ENCODE measurements at regions of chr3 and their contacts with region 1.

Region 1: GRCh38 chr3:4512895-4513616 is 19.9 kb downstream of the ITPR1 start:
- DNase-seq: no peak
- H3K4me3 ChIP-seq: no peak overlapping the region
- H3K4me3 Mint-ChIP-seq: no peak overlapping the region
- H3K27ac ChIP-seq: no peak overlapping the region
- H3K27ac Mint-ChIP-seq: peak overlapping the region in 2 of 7 donors; percentile 39
- H3K4me1 ChIP-seq: peaks cover 12% of the 10 kb centered on the region
- H3K4me1 Mint-ChIP-seq: peaks cover 17 to 20% (median 19%) of the 10 kb centered on the region in 4 donors
- H3K27me3 ChIP-seq: no peaks in the 10 kb centered on the region
- H3K27me3 Mint-ChIP-seq: no peaks in the 10 kb centered on the region

Region 2: GRCh38 chr3:4466741-4467521 is 46.1 kb before region 1 on chr3 and contains the start of gene SUMF1:
- CTCF ChIA-PET with region 1: interaction called, 4 read pairs
- POLR2A ChIA-PET with region 1: no interaction called
- intact Hi-C with region 1: loop called (anchors 2 kb)
- DNase-seq: peak; percentile 67 to 81 (median 74)
- H3K4me3 ChIP-seq: peak within 1 kb of the TSS; percentile 71 to 76
- H3K4me3 Mint-ChIP-seq: peak within 1 kb of the TSS; percentile 91 to 97 (median 93)
- H3K27ac ChIP-seq: peak within 1 kb of the TSS; percentile 71
- H3K27ac Mint-ChIP-seq: peak within 1 kb of the TSS; percentile 84 to 97 (median 93)
- H3K4me1 ChIP-seq: peaks cover 16% of the 10 kb centered on the region
- H3K4me1 Mint-ChIP-seq: peaks cover 9 to 22% (median 17%) of the 10 kb centered on the region in 4 donors
- H3K27me3 ChIP-seq: no peaks in the 10 kb centered on the region
- H3K27me3 Mint-ChIP-seq: no peaks in the 10 kb centered on the region
- total RNA-seq, gene SUMF1: 13.9 to 14.9 TPM

Region 3: DNA sequence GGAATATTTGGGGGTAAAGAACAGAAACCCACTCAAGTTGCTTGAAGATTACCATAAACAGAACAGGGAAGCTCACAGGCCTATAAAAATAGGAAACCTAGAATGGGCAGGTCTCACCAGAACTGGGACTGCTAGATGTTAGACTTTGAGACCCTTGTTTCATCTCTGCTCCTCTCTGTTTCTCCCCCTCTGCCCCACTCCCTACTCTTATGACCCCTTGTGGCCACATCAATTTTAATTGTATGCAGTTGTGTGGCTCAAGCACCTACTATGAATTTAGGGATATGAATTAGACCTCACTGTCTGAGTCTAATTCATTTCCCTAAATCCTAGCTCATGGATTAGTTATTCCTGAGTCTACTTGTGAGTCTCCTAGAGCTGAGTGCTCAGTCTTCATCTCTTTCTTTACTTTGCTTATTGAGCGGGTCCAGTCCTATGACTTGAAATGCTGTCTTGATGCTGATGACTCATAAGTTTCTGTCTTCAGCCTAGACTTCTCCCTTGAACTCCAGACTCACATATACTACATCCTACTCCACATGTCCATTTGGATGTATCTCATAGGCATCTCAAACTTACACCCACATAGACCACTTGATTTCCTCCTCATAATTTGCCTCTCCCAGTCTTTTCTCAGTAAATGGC is 58.8 kb after region 1 on chr3:
- CTCF ChIA-PET with region 1: no interaction called
- POLR2A ChIA-PET with region 1: no interaction called
- intact Hi-C with region 1: loop called (anchors 5 kb)
- DNase-seq: peak in 2 of 5 donors; percentile 7 to 10
- H3K4me3 ChIP-seq: no peak overlapping the region
- H3K4me3 Mint-ChIP-seq: no peak overlapping the region
- H3K27ac ChIP-seq: no peak overlapping the region
- H3K27ac Mint-ChIP-seq: peak overlapping the region in 1 of 7 donors; percentile 8
- H3K4me1 ChIP-seq: no peaks in the 10 kb centered on the region
- H3K4me1 Mint-ChIP-seq: peaks cover 8 to 40% (median 15%) of the 10 kb centered on the region in 4 donors
- H3K27me3 ChIP-seq: no peaks in the 10 kb centered on the region
- H3K27me3 Mint-ChIP-seq: no peaks in the 10 kb centered on the region

Region 4: DNA sequence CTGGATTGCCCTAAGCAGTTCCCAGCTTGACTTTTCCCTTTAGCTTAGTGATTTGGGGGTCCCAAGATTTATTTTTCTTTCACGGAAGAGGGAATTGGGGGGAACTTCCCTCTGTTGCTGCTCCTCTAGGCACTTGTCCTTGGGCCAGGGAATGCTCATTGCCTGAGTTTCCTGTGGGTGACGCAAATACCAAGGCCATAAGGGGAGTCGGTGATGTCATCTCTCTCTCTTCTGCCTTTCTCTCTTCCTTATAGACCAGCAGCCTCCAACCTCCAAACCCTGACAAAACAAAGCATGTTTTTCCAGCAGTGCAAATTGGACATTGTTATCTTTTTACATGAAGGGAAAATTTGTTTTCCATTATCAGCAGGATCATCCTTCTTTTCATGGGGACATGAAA is 100.3 kb after region 1 on chr3:
- CTCF ChIA-PET with region 1: no interaction called
- POLR2A ChIA-PET with region 1: no interaction called
- intact Hi-C with region 1: no loop called
- DNase-seq: no peak
- H3K4me3 ChIP-seq: no peak overlapping the region
- H3K4me3 Mint-ChIP-seq: no peak overlapping the region
- H3K27ac ChIP-seq: no peak overlapping the region
- H3K27ac Mint-ChIP-seq: no peak overlapping the region
- H3K4me1 ChIP-seq: no peaks in the 10 kb centered on the region
- H3K4me1 Mint-ChIP-seq: peaks cover 5 to 13% (median 8%) of the 10 kb centered on the region in 4 donors
- H3K27me3 ChIP-seq: no peaks in the 10 kb centered on the region
- H3K27me3 Mint-ChIP-seq: no peaks in the 10 kb centered on the region